T-cell (primary cell): ENCODE measurements at regions of chr5 and their contacts with region 1.

Region 1: DNA sequence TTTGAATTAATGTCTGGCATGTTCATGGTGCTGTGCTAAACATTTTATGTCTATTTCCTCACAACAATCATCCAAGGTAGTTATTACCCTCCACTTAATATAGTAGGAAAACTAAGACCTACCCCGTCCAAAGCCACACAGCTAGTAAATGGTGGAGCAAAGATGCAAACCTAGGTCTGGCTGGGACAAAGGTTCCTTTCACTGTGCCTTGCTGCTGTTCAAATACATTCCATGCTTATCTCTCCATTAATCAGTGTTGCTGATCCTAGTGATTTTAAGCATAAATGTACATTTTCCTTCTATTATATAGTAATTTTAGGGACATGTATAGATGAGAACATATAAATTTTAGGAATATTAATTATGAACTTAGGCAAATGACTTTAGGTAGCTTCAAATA is 38.7 kb downstream of the CCDC125 start:
- DNase-seq: no peak
- ATAC-seq: no peak
- H3K4me3 ChIP-seq: no peak overlapping the region
- H3K4me3 Mint-ChIP-seq: no peak overlapping the region
- H3K27ac ChIP-seq: no peak overlapping the region
- H3K27ac Mint-ChIP-seq: no peak overlapping the region
- H3K4me1 ChIP-seq: no peaks in the 10 kb centered on the region
- H3K4me1 Mint-ChIP-seq: no peaks in the 10 kb centered on the region
- H3K27me3 ChIP-seq: no peaks in the 10 kb centered on the region
- H3K27me3 Mint-ChIP-seq: no peaks in the 10 kb centered on the region

Region 2: GRCh38 chr5:69252437-69252836 is 41.5 kb before region 1 on chr5:
- CTCF ChIA-PET with region 1: interaction called in 1 of 2 experiments, 3 read pairs
- POLR2A ChIA-PET with region 1: interaction called in 1 of 2 experiments, 10 read pairs
- DNase-seq: no peak
- ATAC-seq: no peak
- H3K4me3 ChIP-seq: no peak overlapping the region
- H3K4me3 Mint-ChIP-seq: no peak overlapping the region
- H3K27ac ChIP-seq: no peak overlapping the region
- H3K27ac Mint-ChIP-seq: no peak overlapping the region
- H3K4me1 ChIP-seq: no peaks in the 10 kb centered on the region
- H3K4me1 Mint-ChIP-seq: peaks cover 9 to 12% (median 12%) of the 10 kb centered on the region in 3 donors
- H3K27me3 ChIP-seq: no peaks in the 10 kb centered on the region
- H3K27me3 Mint-ChIP-seq: no peaks in the 10 kb centered on the region

Region 3: DNA sequence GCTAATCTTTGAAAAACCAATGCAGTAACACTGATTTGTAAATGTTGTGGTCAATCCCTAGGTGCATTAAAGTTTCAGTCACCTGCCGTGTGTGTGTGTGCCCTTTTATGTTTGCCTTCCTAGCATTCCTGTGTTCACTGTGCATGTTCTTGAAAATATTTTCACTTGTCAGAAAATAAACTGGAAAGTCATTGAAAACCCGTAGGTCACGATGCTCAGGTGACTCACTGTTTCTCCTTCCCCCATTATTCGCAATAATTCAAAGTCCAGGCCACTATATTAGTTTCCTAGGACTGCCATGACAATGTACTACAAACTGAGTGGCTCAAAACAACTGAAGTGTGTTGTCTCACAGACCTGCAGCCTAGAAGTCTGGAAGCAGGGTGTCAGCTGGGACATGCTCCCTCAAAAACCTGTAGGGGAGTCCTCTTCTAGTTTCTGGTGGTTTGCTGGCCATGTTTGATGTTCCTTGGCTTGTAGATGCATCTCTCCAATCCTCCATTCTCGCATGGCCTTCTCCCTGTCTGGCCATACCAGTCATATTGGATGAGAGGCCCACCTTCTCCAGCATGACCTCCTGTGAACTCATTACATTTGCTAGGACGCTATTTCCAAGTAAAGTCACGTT is 150.3 kb after region 1 on chr5:
- CTCF ChIA-PET with region 1: no interaction called
- POLR2A ChIA-PET with region 1: no interaction called
- DNase-seq: no peak
- ATAC-seq: no peak
- H3K4me3 ChIP-seq: no peak overlapping the region
- H3K4me3 Mint-ChIP-seq: no peak overlapping the region
- H3K27ac ChIP-seq: no peak overlapping the region
- H3K27ac Mint-ChIP-seq: no peak overlapping the region
- H3K4me1 ChIP-seq: no peaks in the 10 kb centered on the region
- H3K4me1 Mint-ChIP-seq: no peaks in the 10 kb centered on the region
- H3K27me3 ChIP-seq: no peaks in the 10 kb centered on the region
- H3K27me3 Mint-ChIP-seq: no peaks in the 10 kb centered on the region